ENCODE measurements at regions of chr5 and their contacts with region 1.

Region 1: DNA sequence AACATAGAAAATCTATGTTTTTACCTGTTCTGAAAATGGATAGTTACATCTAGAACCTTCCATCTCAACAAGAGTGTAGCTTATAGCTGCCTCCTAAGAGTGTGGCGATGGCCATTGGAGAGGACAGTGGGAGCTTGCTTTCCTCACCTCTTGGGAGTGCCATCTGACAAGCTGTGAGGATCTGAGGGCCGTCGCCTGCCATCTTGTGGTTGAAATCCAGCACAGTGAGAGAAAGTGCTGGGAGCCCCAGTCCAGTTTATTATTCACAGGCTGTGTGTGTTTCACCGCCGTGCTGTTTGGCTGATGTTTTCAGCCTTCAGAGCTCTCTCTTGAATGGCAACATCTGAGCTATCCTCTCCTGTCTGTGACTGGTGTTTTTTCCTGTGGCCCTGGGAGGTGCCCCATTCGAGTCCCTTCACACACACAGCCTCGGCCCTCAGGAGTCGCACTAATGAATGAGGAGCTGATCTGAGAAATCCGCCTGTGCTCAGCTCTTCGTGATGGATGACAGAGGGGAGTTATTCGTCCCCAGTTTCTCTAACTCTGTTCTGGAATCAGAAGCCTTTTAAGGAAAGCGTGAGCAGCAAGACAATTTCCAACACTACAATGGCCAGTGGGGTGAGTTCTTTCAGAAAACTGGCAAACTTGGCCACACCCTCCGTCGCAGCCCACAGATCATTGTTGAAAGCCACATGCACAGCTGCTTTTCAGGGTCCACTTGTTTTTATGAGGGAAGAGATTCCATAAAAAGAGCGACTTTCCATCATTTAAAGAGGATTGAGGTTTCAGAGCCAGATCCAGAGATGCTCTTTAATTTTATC is 170.3 kb downstream of the PDZD2 start:
- DNase-seq: peak; percentile 67 to 78 (median 76)
- H3K4me3 ChIP-seq: no peak overlapping the region
- H3K27ac ChIP-seq: no peak overlapping the region
- H3K4me1 ChIP-seq: peaks cover 0 to 6% (median 1%) of the 10 kb centered on the region in 4 experiments
- H3K27me3 ChIP-seq: no peaks in the 10 kb centered on the region

Region 2: DNA sequence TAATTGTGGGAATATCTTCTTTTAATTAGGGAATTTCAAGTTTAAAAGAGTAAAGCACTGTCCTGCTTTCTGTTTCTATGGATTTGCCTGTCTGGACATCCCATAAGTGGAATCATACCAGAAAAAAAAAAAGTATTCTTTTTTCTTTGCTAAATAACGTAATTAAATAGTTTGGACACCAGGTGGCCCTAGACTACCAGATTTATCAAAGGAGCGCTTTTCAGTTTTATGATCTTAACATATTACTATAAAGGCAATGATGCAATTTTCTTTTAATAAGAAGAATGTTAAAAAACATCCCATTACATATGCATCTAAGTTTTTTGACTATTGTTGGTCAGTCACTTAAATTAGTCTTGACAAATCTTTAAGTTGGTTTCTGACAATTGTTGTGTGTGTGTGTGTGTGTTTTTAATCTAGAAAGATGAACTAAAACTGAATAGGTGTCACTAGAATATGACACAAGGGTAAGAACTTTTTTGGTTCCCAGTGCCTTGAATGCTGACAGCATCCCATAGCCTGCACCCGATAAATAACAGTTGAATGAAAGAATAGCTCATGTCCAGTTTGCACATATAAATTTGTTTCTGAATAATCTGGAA is 227.7 kb before region 1 on chr5:
- CTCF ChIA-PET with region 1: interaction called, 11 read pairs
- POLR2A ChIA-PET with region 1: no interaction called
- DNase-seq: peak; percentile 64 to 81 (median 78)
- H3K4me3 ChIP-seq: no peak overlapping the region
- H3K27ac ChIP-seq: no peak overlapping the region
- H3K4me1 ChIP-seq: peaks cover 0 to 7% (median 2%) of the 10 kb centered on the region in 4 experiments
- H3K27me3 ChIP-seq: no peaks in the 10 kb centered on the region

Region 3: DNA sequence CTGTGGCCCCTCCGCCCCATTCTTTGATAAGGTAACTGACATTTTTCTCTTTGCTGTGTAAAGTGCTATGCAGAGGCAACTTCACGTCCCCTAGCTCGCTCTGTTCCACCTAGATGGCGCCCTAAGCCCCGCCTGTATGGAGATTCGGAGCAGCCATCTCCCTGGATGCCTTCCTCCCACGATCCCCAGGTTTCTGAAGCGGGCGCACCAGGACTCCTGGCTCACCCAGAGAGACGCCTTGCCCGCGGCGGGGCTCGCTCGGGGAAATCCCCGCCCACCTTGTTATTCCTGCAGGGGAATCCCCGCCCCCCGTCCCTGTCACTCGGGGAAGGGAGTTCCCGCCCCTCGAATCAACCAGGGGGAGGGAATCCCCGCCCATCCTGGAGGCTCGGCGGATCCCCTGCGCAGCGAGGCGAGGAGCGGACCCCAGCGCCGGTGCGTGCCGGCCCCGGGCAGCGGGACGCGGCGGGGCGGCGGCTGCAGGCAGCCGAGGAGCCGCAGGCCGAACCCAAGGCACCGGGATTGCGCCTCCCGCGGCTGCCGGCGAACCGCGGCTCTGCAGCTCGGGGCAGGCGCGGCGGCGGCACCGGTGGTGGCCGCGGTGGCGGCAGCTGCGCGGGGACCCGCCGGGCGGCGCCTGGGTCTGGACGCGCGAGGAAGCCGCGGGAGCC is 170.4 kb before region 1 on chr5 and contains the start of gene PDZD2:
- CTCF ChIA-PET with region 1: interaction called, 13 read pairs
- POLR2A ChIA-PET with region 1: no interaction called
- DNase-seq: peak; percentile 77 to 87 (median 86)
- H3K4me3 ChIP-seq: peak within 1 kb of the TSS; percentile 59 to 92 (median 76)
- H3K27ac ChIP-seq: peak within 1 kb of the TSS in 1 of 2 experiments; percentile 75
- H3K4me1 ChIP-seq: peaks cover 2 to 66% (median 32%) of the 10 kb centered on the region in 4 experiments
- H3K27me3 ChIP-seq: peaks cover 0 to 17% (median 0%) of the 10 kb centered on the region in 5 experiments

Region 4: DNA sequence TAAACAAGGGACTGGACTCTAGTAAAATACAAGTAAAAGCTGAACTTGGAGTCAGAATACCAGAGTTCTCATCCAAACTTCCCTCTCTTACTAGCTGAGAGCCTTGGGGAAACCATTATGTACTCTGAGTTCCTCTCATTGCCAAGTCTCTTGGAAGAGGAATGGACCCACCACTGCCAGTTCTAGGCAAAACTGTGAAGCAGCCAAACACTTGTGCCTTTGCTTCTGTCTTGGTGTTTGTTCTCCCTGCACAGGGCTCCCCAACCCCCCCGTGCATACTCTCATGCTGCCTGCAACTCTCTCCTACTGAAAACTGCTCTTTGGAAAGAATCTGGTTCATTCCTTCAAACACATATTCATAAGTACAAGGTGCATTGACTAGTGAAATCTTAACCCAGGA is 67.8 kb before region 1 on chr5:
- CTCF ChIA-PET with region 1: no interaction called
- POLR2A ChIA-PET with region 1: no interaction called
- DNase-seq: no peak
- H3K4me3 ChIP-seq: no peak overlapping the region
- H3K27ac ChIP-seq: no peak overlapping the region
- H3K4me1 ChIP-seq: no peaks in the 10 kb centered on the region
- H3K27me3 ChIP-seq: no peaks in the 10 kb centered on the region

Region 5: GRCh38 chr5:32092938-32093812 is 283.9 kb after region 1 on chr5:
- CTCF ChIA-PET with region 1: interaction called, 14 read pairs
- POLR2A ChIA-PET with region 1: no interaction called
- DNase-seq: peak; percentile 76 to 90 (median 87)
- H3K4me3 ChIP-seq: no peak overlapping the region
- H3K27ac ChIP-seq: no peak overlapping the region
- H3K4me1 ChIP-seq: peaks cover 0 to 3% (median 0%) of the 10 kb centered on the region in 4 experiments
- H3K27me3 ChIP-seq: no peaks in the 10 kb centered on the region